ENCODE measurements at regions of chr9 and their contacts with region 1.

Region 1: DNA sequence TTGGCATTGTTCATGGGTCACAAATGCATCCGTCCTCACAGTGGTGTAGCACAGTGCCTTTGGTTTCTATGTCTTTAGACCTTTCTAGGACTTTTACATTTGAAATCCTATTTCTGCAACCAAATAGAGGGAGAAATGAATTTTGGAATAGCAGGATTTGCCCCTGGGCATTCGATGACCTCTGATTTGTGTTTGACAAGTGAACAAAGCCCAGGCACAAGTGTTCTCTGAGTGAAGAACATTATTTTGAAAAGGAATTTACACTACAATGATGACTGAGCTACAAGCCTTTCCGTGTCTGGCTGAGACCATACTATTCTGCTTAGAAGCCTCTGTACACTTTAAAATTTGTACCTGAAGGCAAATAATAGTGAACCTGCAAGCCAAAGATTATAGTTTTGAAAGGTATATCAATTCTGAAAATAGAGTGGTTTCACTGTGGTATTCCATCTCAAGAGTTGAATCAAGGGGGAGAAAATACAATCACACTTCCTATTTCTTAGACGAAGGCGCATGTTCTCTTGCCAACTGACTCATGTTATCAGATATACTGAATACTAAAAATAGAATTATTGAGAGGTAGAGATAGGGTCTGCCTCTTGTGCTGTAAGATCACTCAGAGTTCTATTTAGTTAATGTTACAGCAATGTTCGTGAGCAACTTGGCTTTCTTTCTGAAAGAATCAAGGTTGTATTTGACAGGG is 297.6 kb downstream of the KDM4C start:
- DNase-seq: no peak
- H3K4me3 Mint-ChIP-seq: no peak overlapping the region
- H3K27ac Mint-ChIP-seq: no peak overlapping the region
- H3K4me1 Mint-ChIP-seq: peaks cover 8% of the 10 kb centered on the region
- H3K27me3 Mint-ChIP-seq: no peaks in the 10 kb centered on the region

Region 2: GRCh38 chr9:6584881-6585597 is 470.3 kb before region 1 on chr9:
- CTCF ChIA-PET with region 1: no interaction called
- intact Hi-C with region 1: loop called (anchors 2 kb)
- DNase-seq: no peak
- H3K4me3 Mint-ChIP-seq: no peak overlapping the region
- H3K27ac Mint-ChIP-seq: no peak overlapping the region
- H3K4me1 Mint-ChIP-seq: no peaks in the 10 kb centered on the region
- H3K27me3 Mint-ChIP-seq: no peaks in the 10 kb centered on the region

Region 3: GRCh38 chr9:6827439-6827838 is 227.9 kb before region 1 on chr9:
- CTCF ChIA-PET with region 1: interaction called, 5 read pairs
- intact Hi-C with region 1: loop called (anchors 5 kb)
- DNase-seq: peak; percentile 68
- H3K4me3 Mint-ChIP-seq: no peak overlapping the region
- H3K27ac Mint-ChIP-seq: no peak overlapping the region
- H3K4me1 Mint-ChIP-seq: peaks cover 8% of the 10 kb centered on the region
- H3K27me3 Mint-ChIP-seq: no peaks in the 10 kb centered on the region

Region 4: GRCh38 chr9:6907772-6908381 is 147.5 kb before region 1 on chr9:
- CTCF ChIA-PET with region 1: no interaction called
- intact Hi-C with region 1: loop called (anchors 5 kb)
- DNase-seq: no peak
- H3K4me3 Mint-ChIP-seq: no peak overlapping the region
- H3K27ac Mint-ChIP-seq: no peak overlapping the region
- H3K4me1 Mint-ChIP-seq: peaks cover 5% of the 10 kb centered on the region
- H3K27me3 Mint-ChIP-seq: no peaks in the 10 kb centered on the region

Region 5: GRCh38 chr9:7130266-7130820 is 75.0 kb after region 1 on chr9:
- CTCF ChIA-PET with region 1: no interaction called
- intact Hi-C with region 1: no loop called
- DNase-seq: no peak
- H3K4me3 Mint-ChIP-seq: no peak overlapping the region
- H3K27ac Mint-ChIP-seq: no peak overlapping the region
- H3K4me1 Mint-ChIP-seq: no peaks in the 10 kb centered on the region
- H3K27me3 Mint-ChIP-seq: no peaks in the 10 kb centered on the region

Region 6: DNA sequence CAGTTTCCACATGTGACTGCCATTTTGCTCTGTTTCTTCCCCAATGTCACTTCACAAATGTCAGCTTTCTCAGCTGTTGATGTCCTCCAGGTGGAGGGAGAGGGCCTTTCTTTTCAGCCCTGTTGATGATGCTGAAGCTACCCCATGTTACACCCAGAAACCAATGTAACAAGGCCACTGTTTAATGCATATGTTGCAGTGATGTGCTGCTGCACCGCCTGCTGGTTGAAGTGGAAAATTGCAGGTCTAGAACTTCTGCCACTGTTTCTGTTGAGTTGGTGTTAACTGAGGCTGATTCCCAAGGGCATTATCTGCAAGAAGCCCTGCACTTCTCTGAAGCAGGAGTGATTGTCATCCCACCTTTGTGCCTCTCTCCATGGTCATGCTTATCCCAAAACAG is 130.8 kb after region 1 on chr9:
- CTCF ChIA-PET with region 1: interaction called, 4 read pairs
- intact Hi-C with region 1: loop called (anchors 1 kb)
- DNase-seq: peak; percentile 17
- H3K4me3 Mint-ChIP-seq: no peak overlapping the region
- H3K27ac Mint-ChIP-seq: no peak overlapping the region
- H3K4me1 Mint-ChIP-seq: no peaks in the 10 kb centered on the region
- H3K27me3 Mint-ChIP-seq: no peaks in the 10 kb centered on the region

Region 7: GRCh38 chr9:7536310-7536939 is 481.1 kb after region 1 on chr9:
- CTCF ChIA-PET with region 1: interaction called, 6 read pairs
- intact Hi-C with region 1: loop called (anchors 1 kb)
- DNase-seq: peak; percentile 62
- H3K4me3 Mint-ChIP-seq: no peak overlapping the region
- H3K27ac Mint-ChIP-seq: no peak overlapping the region
- H3K4me1 Mint-ChIP-seq: peaks cover 11% of the 10 kb centered on the region
- H3K27me3 Mint-ChIP-seq: peaks cover 9% of the 10 kb centered on the region